Sigmoid colon (tissue), 7 donors: ENCODE measurements at regions of chr10 and their contacts with region 1.

Region 1: GRCh38 chr10:3852147-3852904 is 67.3 kb upstream of the KLF6 start:
- DNase-seq: peak; percentile 93
- H3K4me3 ChIP-seq: no peak overlapping the region
- H3K27ac ChIP-seq: peak overlapping the region; percentile 79 to 90 (median 88)
- H3K4me1 ChIP-seq: peaks cover 0 to 38% (median 25%) of the 10 kb centered on the region in 4 donors
- H3K27me3 ChIP-seq: no peaks in the 10 kb centered on the region
- CTCF ChIP-seq: no peak
- EP300 ChIP-seq: peak; percentile 12 to 90 (median 60)
- POLR2A ChIP-seq: peak in 1 of 2 donors; percentile 13

Region 2: GRCh38 chr10:4061441-4061951 is 209.2 kb after region 1 on chr10:
- intact Hi-C with region 1: loop called (anchors 5 kb)
- DNase-seq: peak; percentile 91
- H3K4me3 ChIP-seq: no peak overlapping the region
- H3K27ac ChIP-seq: peak overlapping the region; percentile 65 to 83 (median 74)
- H3K4me1 ChIP-seq: peaks cover 0 to 47% (median 44%) of the 10 kb centered on the region in 4 donors
- H3K27me3 ChIP-seq: no peaks in the 10 kb centered on the region
- CTCF ChIP-seq: no peak
- EP300 ChIP-seq: no peak
- POLR2A ChIP-seq: no peak